G401 (cell line): ENCODE measurements at regions of chr14 and their contacts with region 1.

Region 1: GRCh38 chr14:78598041-78598920 is 428.1 kb downstream of the NRXN3 start:
- DNase-seq: peak; percentile 77

Region 2: GRCh38 chr14:78519856-78520255 is 78.4 kb before region 1 on chr14:
- in situ Hi-C with region 1: loop called (anchors 5 kb)
- DNase-seq: no peak

Region 3: GRCh38 chr14:78666336-78667056 is 68.2 kb after region 1 on chr14:
- in situ Hi-C with region 1: no loop called
- DNase-seq: no peak